Heart left ventricle (tissue), 16 donors: ENCODE measurements at regions of chr2 and their contacts with region 1.

Region 1: DNA sequence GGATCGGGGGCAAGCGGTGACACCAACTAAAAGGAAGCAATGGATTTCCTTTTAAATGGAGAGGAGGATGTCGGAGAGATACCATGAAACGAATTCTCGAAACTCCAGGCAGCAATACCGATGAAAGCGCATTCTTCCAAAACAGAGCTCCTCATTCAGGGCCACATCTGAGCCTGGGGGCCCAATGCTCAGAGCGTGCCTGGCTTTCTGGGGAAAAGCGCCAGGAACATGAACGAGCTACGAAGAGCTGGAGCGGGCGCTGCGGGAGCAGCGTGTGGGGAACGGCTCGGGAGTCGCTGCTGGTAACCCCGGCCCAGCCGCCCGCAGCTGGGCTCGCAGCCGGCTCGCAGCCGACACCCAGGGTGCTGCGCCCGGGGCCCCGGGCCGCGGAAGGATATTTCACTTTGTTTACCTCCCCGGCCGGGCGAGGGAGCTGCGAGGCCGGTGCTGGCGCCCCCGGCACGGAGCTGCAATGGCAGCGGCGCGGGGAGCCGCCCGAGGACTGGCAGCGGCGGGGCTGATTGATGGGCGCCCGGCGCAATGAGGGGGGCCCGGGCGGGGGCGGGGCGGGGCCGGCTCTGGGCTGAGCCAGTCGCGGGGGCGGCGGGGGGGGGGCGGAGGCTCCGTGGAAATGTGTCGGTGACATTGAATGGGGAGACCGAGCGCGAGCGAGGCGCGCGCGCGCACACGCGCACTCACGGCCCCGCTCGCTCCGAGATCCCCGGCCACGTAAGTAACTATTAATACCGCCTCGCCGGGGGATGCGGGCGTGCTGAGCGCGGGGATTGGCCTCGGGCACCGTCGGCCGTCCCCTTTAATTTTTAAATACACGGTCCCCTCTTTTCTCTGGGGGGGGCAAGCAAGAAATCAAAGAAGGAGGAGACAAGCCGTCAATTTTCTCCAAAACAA is at the start of gene TRIB2:
- DNase-seq: peak; percentile 92 to 95 (median 94)
- ATAC-seq: peak; percentile 74 to 90 (median 81)
- H3K4me3 ChIP-seq: peak within 1 kb of the TSS; percentile 68 to 97 (median 87)
- H3K27ac ChIP-seq: peak within 1 kb of the TSS; percentile 90 to 100 (median 96)
- H3K4me1 ChIP-seq: peaks cover 0 to 39% (median 24%) of the 10 kb centered on the region in 12 donors
- H3K27me3 ChIP-seq: no peaks in the 10 kb centered on the region
- CTCF ChIP-seq: peak in 6 of 12 donors; percentile 10 to 39 (median 18)
- POLR2A ChIP-seq: peak; percentile 60 to 88
- total RNA-seq, gene TRIB2: 34.3 to 140 (median 41.4) TPM

Region 2: GRCh38 chr2:11863513-11864328 is 852.8 kb before region 1 on chr2:
- intact Hi-C with region 1: loop called in 8 of 10 experiments (anchors 2 to 10 kb)
- DNase-seq: peak; percentile 85 to 91 (median 87)
- ATAC-seq: peak; percentile 83 to 96 (median 94)
- H3K4me3 ChIP-seq: peak overlapping the region in 6 of 12 donors; percentile 3 to 24 (median 15)
- H3K27ac ChIP-seq: peak overlapping the region in 11 of 12 donors; percentile 45 to 67 (median 53)
- H3K4me1 ChIP-seq: peaks cover 0 to 28% (median 12%) of the 10 kb centered on the region in 12 donors
- H3K27me3 ChIP-seq: no peaks in the 10 kb centered on the region
- CTCF ChIP-seq: peak; percentile 90 to 99 (median 96)
- POLR2A ChIP-seq: no peak

Region 3: GRCh38 chr2:12320991-12321641 is 395.4 kb before region 1 on chr2:
- intact Hi-C with region 1: loop called in 2 of 10 experiments (anchors 10 kb)
- DNase-seq: peak in 4 of 5 donors; percentile 25 to 68 (median 48)
- ATAC-seq: peak; percentile 53 to 88 (median 81)
- H3K4me3 ChIP-seq: no peak overlapping the region
- H3K27ac ChIP-seq: peak overlapping the region in 8 of 12 donors; percentile 2 to 41 (median 28)
- H3K4me1 ChIP-seq: peaks cover 0 to 26% (median 5%) of the 10 kb centered on the region in 12 donors
- H3K27me3 ChIP-seq: no peaks in the 10 kb centered on the region
- CTCF ChIP-seq: peak in 2 of 12 donors; percentile 3 to 16
- POLR2A ChIP-seq: no peak

Region 4: GRCh38 chr2:12501469-12502158 is 214.9 kb before region 1 on chr2:
- intact Hi-C with region 1: loop called in 3 of 10 experiments (anchors 5 to 10 kb)
- DNase-seq: peak; percentile 58 to 78 (median 72)
- ATAC-seq: peak; percentile 84 to 98 (median 89)
- H3K4me3 ChIP-seq: no peak overlapping the region
- H3K27ac ChIP-seq: peak overlapping the region; percentile 61 to 92 (median 86)
- H3K4me1 ChIP-seq: peaks cover 0 to 56% (median 12%) of the 10 kb centered on the region in 12 donors
- H3K27me3 ChIP-seq: no peaks in the 10 kb centered on the region
- CTCF ChIP-seq: no peak
- POLR2A ChIP-seq: no peak

Region 5: DNA sequence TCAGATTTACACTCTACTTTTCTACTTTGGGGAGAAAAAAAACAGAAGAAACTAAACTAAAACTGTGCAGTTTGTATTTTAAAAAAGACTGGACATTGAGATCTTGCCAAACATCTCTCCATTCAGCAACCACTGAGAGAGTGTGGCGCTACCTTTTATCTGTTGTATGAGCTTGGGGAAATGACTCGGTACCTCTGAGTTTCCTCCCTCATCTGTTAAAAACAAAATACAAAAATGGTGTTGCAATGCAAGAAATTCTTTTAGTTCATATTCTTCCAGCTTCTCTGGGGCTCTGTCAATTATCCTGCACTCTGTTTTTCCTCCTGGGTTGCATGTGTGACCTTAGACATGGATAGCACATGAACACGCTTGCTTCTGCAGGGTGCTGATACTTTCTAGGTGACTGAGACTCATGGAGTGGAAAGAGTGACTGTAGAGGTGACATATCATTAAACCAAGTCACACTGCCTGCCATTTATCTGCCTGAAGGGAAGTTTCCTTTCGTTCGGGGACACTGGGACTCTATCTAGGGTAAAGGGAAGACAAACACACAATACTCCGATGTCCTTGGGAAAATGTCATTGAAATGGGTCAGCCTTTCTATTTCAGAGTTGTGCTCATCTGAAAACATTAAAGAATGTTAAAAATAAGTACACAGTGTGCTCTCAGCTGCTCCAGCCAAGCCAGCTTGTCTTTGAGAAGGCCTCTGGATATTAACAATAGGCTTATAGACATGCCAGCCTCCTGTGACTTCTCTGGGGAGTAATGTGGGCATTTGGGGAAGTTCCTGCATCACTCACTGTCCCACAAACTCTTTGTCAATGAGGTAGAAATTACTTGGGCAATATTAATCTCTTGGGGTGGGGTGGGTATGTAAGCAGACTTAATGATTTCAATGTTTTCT is 91.6 kb after region 1 on chr2:
- intact Hi-C with region 1: loop called in 5 of 10 experiments (anchors 5 to 10 kb)
- DNase-seq: peak in 2 of 5 donors; percentile 41 to 48
- ATAC-seq: peak; percentile 74 to 90 (median 84)
- H3K4me3 ChIP-seq: no peak overlapping the region
- H3K27ac ChIP-seq: peak overlapping the region; percentile 42 to 87 (median 72)
- H3K4me1 ChIP-seq: peaks cover 9 to 58% (median 44%) of the 10 kb centered on the region in 12 donors
- H3K27me3 ChIP-seq: no peaks in the 10 kb centered on the region
- CTCF ChIP-seq: no peak
- POLR2A ChIP-seq: peak in 1 of 2 donors; percentile 17

Region 6: GRCh38 chr2:12931186-12931844 is 214.8 kb after region 1 on chr2:
- intact Hi-C with region 1: loop called in 9 of 10 experiments (anchors 1 to 5 kb)
- DNase-seq: peak in 2 of 5 donors; percentile 23 to 29
- ATAC-seq: peak; percentile 78 to 92 (median 88)
- H3K4me3 ChIP-seq: no peak overlapping the region
- H3K27ac ChIP-seq: peak overlapping the region in 8 of 12 donors; percentile 2 to 45 (median 16)
- H3K4me1 ChIP-seq: peaks cover 6 to 45% (median 25%) of the 10 kb centered on the region in 12 donors
- H3K27me3 ChIP-seq: no peaks in the 10 kb centered on the region
- CTCF ChIP-seq: peak; percentile 81 to 95 (median 93)
- POLR2A ChIP-seq: no peak

Region 7: GRCh38 chr2:13230221-13230620 is 513.7 kb after region 1 on chr2:
- intact Hi-C with region 1: no loop called
- DNase-seq: no peak
- ATAC-seq: no peak
- H3K4me3 ChIP-seq: no peak overlapping the region
- H3K27ac ChIP-seq: no peak overlapping the region
- H3K4me1 ChIP-seq: no peaks in the 10 kb centered on the region
- H3K27me3 ChIP-seq: no peaks in the 10 kb centered on the region
- CTCF ChIP-seq: no peak
- POLR2A ChIP-seq: no peak